ENCODE measurements at regions of chr16 and their contacts with region 1.

Region 1: DNA sequence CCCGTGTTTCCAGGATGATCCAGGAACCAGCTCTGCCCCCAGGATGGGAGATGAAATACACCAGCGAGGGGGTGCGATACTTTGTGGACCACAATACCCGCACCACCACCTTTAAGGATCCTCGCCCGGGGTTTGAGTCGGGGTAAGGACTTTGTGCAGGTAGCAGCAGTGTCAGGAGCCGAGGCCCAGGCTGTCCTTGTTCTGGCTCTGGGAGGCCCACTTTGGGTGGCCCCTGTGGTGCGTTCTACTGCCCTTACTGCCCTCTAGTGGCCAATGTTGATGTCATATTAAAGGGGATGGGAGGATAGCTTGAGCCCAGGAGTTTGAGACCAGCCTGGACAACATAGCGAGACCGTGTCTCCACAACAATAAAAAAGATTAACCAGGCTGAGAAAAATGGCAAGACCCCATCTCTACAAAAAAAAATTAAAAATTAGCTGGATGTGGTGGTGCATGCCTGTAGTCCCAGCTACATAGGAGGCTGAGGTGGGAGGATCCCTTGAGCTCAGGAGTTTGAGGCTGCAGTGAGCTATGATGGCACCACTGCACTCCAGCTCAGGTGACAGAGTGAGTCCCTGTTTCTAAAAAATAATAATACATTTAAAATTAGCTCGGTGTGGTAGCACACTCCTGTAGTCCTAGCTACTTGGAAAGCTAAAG is 20.9 kb upstream of the CLEC18A start:
- H3K4me3 ChIP-seq: no peak overlapping the region
- H3K27ac ChIP-seq: no peak overlapping the region
- H3K4me1 ChIP-seq: no peaks in the 10 kb centered on the region
- CTCF ChIP-seq: peak; percentile 55

Region 2: DNA sequence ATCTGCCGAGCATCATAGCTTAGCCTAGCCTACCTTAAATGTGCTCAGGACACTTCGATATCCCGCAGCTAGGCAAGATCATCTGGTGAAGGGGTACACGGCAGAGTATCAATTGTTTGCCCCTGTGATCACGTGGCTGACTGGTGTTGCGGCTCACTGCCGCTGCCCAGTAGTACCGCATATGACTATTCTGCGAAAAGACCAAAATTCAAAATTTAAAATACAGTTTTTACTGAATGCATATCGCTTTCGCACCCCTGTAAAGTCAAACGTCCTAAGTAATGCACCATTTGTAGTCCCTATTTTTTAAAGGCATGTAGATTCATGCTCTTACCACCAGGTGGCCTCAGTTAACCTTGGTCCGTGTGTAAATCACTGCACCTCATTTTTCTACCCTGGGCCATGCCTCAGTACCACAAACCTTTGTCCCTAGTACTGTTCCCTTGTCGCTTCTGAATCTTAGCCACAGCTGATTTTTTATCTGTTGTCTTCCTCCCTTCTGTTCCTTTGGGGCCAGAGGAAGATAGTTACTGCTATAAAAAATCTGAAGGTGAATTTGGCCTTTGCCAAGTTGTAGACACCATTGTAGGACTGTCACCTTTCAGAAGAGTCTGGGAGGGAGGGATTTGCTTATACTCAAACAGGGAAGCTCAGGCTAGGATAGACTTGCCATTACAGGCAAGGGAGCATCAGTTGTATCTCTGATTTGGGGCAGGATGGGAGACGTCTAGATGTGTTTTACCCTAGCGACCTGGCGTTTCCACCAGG is 133.7 kb before region 1 on chr16:
- CTCF ChIA-PET with region 1: interaction called, 81 read pairs
- POLR2A ChIA-PET with region 1: no interaction called
- H3K4me3 ChIP-seq: no peak overlapping the region
- H3K27ac ChIP-seq: no peak overlapping the region
- H3K4me1 ChIP-seq: no peaks in the 10 kb centered on the region
- CTCF ChIP-seq: peak; percentile 67; the same call in 1 of the 2 replicates

Region 3: DNA sequence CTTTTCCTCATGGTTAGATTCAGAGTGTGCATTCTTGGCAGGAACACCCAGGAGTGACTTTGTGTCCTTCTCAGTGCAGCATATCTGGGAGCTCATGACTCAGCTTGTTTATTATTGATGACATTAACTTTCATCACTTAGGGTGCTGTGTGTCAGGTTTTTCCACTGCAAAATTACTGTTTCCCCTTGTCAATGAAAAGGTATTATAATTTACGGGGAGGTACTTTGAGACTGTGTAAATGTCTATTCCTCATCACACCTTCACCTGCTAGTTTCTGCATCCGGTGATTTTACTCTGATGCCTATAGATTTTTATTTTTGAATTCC is 117.6 kb before region 1 on chr16:
- CTCF ChIA-PET with region 1: interaction called, 13 read pairs
- POLR2A ChIA-PET with region 1: no interaction called
- H3K4me3 ChIP-seq: no peak overlapping the region
- H3K27ac ChIP-seq: no peak overlapping the region
- H3K4me1 ChIP-seq: no peaks in the 10 kb centered on the region
- CTCF ChIP-seq: no peak

Region 4: DNA sequence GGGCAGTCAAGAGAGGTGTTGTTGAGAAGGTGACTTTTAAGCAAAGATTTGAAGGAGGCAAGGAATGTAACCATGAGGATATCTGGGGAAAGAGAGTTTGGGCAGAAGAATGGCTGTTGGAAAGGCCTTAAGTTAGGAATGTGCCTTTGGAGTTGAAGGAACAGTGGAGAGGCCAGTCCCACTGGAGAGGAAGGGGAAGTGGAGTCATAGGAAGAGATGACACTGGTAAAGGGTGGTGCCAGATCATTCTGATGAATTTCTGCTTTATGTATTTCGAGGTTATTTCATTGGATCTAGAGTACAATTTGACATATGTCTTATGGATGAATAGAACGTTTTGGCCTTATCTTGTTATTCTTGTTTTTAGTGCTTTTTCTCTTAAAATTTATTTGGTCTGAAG is 74.7 kb before region 1 on chr16:
- CTCF ChIA-PET with region 1: no interaction called
- POLR2A ChIA-PET with region 1: no interaction called
- H3K4me3 ChIP-seq: no peak overlapping the region
- H3K27ac ChIP-seq: no peak overlapping the region
- H3K4me1 ChIP-seq: no peaks in the 10 kb centered on the region
- CTCF ChIP-seq: no peak

Region 5: GRCh38 chr16:69903865-69904415 is 26.3 kb before region 1 on chr16:
- CTCF ChIA-PET with region 1: interaction called, 11 read pairs
- POLR2A ChIA-PET with region 1: no interaction called
- H3K4me3 ChIP-seq: no peak overlapping the region
- H3K27ac ChIP-seq: no peak overlapping the region
- H3K4me1 ChIP-seq: no peaks in the 10 kb centered on the region
- CTCF ChIP-seq: no peak

Region 6: DNA sequence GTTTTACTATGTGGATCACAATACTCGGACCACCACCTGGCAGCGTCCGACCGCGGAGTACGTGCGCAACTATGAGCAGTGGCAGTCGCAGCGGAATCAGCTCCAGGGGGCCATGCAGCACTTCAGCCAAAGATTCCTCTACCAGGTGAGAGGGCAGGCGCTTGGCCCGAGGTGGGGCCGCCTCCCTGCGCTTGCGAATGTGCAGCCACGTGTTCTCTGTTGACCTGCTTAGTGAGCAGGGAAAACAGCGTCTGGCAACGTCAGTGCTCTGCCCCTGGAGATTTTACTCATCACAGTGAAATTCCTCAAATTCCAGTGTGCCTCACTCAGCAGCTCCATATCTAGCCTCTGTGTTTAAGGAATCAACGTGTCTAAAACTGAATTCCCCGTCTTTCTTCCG is 12.5 kb before region 1 on chr16:
- CTCF ChIA-PET with region 1: interaction called, 28 read pairs
- POLR2A ChIA-PET with region 1: no interaction called
- H3K4me3 ChIP-seq: no peak overlapping the region
- H3K27ac ChIP-seq: no peak overlapping the region
- H3K4me1 ChIP-seq: no peaks in the 10 kb centered on the region
- CTCF ChIP-seq: no peak

Region 7: GRCh38 chr16:69941251-69942098 is 11.2 kb after region 1 on chr16:
- CTCF ChIA-PET with region 1: interaction called, 11 read pairs
- POLR2A ChIA-PET with region 1: no interaction called
- H3K4me3 ChIP-seq: no peak overlapping the region
- H3K27ac ChIP-seq: no peak overlapping the region
- H3K4me1 ChIP-seq: no peaks in the 10 kb centered on the region
- CTCF ChIP-seq: no peak

Measured in HEK293 (cell line).